A673 (cell line): ENCODE measurements at regions of chr13 and their contacts with region 1.

Region 1: DNA sequence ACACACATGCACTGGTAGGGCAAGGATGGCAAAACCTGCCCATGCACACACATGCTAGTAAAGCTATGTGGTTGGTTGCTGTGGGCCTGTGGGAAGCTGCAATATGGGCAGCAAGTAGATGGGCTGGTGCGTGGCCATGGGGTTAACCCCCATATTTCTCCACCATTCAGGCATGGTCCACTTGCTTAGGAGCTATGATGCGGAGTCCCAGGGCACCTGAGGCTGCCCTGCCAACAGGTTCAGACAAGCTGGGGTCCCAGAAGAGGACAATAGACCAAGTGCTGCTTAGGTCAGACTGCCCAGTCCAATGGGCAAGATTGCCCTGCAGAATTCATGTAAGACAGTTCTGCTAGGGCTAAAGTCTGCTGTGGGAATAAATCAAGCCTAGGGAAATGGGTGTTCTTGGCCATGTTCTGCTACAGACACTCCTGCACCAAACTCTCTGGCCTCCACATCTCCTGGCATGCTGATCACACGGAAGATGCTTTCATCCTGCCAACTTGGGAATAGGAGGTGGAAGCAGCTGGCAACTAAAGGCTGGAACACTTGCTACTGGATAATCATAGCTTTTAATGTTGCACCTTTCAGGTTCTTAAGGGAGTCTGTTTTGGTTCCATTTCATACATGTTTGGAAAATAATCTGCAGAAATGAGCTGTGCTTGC is 646.3 kb upstream of the SLITRK1 start:
- DNase-seq: no peak
- H3K4me3 ChIP-seq: no peak overlapping the region
- H3K27ac ChIP-seq: no peak overlapping the region
- H3K4me1 ChIP-seq: no peaks in the 10 kb centered on the region
- H3K27me3 ChIP-seq: no peaks in the 10 kb centered on the region
- CTCF ChIP-seq: no peak

Region 2: GRCh38 chr13:83297586-83298290 is 1230.8 kb before region 1 on chr13:
- CTCF ChIA-PET with region 1: no interaction called
- POLR2A ChIA-PET with region 1: no interaction called
- intact Hi-C with region 1: loop called (anchors 10 kb)
- DNase-seq: no peak
- H3K4me3 ChIP-seq: no peak overlapping the region
- H3K27ac ChIP-seq: no peak overlapping the region
- H3K4me1 ChIP-seq: no peaks in the 10 kb centered on the region
- H3K27me3 ChIP-seq: no peaks in the 10 kb centered on the region
- CTCF ChIP-seq: no peak